Mammary epithelial cell (primary cell): ENCODE measurements at regions of chr18 and their contacts with region 1.

Region 1: GRCh38 chr18:32271672-32272208 is 81.9 kb downstream of the MEP1B start:
- DNase-seq: peak; percentile 8
- H3K4me3 ChIP-seq: no peak overlapping the region
- H3K27ac ChIP-seq: no peak overlapping the region
- H3K4me1 ChIP-seq: no peaks in the 10 kb centered on the region
- H3K27me3 ChIP-seq: no peaks in the 10 kb centered on the region
- CTCF ChIP-seq: peak; percentile 71

Region 2: DNA sequence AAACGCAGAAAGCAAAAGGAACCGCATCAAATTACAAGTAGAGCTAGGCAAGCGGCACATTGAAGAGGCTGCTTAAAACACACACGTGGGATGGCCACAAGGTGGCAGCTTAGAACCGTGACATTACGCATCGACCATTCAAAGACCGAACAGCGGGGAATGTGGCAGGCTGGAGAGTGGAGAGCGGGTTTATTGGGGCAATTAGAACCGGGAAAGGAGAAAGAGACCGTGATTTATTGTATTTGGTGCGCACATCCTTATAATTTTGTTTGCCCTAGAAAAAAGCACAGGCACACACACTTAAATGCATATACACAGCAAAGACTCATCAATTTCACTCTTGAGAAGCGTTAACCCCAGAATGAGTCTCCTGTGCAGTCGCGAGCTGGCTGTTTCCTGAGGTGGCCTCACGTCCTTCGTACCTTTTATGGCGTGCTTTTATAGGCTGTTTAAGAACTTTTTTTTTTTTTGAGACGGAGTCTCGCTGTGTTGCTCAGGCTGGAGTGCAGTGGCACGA is 113.6 kb before region 1 on chr18:
- CTCF ChIA-PET with region 1: no interaction called
- dilution Hi-C with region 1: no loop called
- in situ Hi-C with region 1: loop called in 1 of 2 experiments (anchors 25 kb)
- intact Hi-C with region 1: loop called (anchors 1 kb)
- DNase-seq: peak; percentile 71
- H3K4me3 ChIP-seq: peak overlapping the region in 1 of 3 experiments; percentile 31
- H3K27ac ChIP-seq: no peak overlapping the region
- H3K4me1 ChIP-seq: peaks cover 5% of the 10 kb centered on the region
- H3K27me3 ChIP-seq: no peaks in the 10 kb centered on the region
- CTCF ChIP-seq: peak; percentile 76 to 78

Region 3: DNA sequence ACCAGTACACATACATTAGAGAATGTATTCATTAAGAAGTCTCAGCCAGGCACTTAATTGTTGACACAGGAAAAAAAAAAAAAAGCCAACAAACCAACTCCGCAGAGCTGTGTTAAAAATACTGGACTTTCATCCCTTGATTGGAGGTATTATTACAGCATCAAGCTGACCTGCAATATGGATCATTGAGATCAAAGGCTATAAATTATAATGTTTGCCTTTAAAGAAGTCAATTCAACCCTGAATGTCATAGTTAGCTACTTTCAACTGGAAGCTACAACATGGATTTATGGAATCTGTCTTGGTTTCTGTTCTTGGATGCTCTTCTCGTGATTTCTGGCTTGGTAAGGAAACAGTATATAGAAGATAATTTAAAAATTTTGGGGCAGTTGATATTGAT is 82.0 kb before region 1 on chr18 and contains the start of gene MEP1B:
- CTCF ChIA-PET with region 1: no interaction called
- dilution Hi-C with region 1: no loop called
- in situ Hi-C with region 1: no loop called
- intact Hi-C with region 1: no loop called
- DNase-seq: no peak
- H3K4me3 ChIP-seq: no peak within 1 kb of the TSS
- H3K27ac ChIP-seq: no peak within 1 kb of the TSS
- H3K4me1 ChIP-seq: no peaks in the 10 kb centered on the region
- H3K27me3 ChIP-seq: peaks cover 5% of the 10 kb centered on the region
- CTCF ChIP-seq: no peak
- total RNA-seq, gene MEP1B: under 0.01 TPM in 1 of 2 donors, not detected in the other

Region 4: GRCh38 chr18:32238635-32239268 is 33.0 kb before region 1 on chr18:
- CTCF ChIA-PET with region 1: no interaction called
- dilution Hi-C with region 1: no loop called
- in situ Hi-C with region 1: no loop called
- intact Hi-C with region 1: no loop called
- DNase-seq: no peak
- H3K4me3 ChIP-seq: no peak overlapping the region
- H3K27ac ChIP-seq: no peak overlapping the region
- H3K4me1 ChIP-seq: no peaks in the 10 kb centered on the region
- H3K27me3 ChIP-seq: no peaks in the 10 kb centered on the region
- CTCF ChIP-seq: peak in 1 of 2 donors; percentile 17